HEK293 (cell line): ENCODE measurements at regions of chr17 and their contacts with region 1.

Region 1: GRCh38 chr17:42819944-42820535 is 4.0 kb downstream of the BECN1 start:
- H3K4me3 ChIP-seq: no peak overlapping the region
- H3K27ac ChIP-seq: no peak overlapping the region
- H3K4me1 ChIP-seq: peaks cover 4% of the 10 kb centered on the region; the same call in 1 of the 2 replicates
- CTCF ChIP-seq: no peak

Region 2: GRCh38 chr17:42773290-42774035 is 46.6 kb before region 1 on chr17 and contains the start of gene VPS25:
- CTCF ChIA-PET with region 1: interaction called, 4 read pairs
- POLR2A ChIA-PET with region 1: interaction called, 17 read pairs
- H3K4me3 ChIP-seq: peak within 1 kb of the TSS; percentile 94
- H3K27ac ChIP-seq: peak within 1 kb of the TSS; percentile 64
- H3K4me1 ChIP-seq: peaks cover 4% of the 10 kb centered on the region; the same call in 1 of the 2 replicates
- CTCF ChIP-seq: peak; percentile 79

Region 3: DNA sequence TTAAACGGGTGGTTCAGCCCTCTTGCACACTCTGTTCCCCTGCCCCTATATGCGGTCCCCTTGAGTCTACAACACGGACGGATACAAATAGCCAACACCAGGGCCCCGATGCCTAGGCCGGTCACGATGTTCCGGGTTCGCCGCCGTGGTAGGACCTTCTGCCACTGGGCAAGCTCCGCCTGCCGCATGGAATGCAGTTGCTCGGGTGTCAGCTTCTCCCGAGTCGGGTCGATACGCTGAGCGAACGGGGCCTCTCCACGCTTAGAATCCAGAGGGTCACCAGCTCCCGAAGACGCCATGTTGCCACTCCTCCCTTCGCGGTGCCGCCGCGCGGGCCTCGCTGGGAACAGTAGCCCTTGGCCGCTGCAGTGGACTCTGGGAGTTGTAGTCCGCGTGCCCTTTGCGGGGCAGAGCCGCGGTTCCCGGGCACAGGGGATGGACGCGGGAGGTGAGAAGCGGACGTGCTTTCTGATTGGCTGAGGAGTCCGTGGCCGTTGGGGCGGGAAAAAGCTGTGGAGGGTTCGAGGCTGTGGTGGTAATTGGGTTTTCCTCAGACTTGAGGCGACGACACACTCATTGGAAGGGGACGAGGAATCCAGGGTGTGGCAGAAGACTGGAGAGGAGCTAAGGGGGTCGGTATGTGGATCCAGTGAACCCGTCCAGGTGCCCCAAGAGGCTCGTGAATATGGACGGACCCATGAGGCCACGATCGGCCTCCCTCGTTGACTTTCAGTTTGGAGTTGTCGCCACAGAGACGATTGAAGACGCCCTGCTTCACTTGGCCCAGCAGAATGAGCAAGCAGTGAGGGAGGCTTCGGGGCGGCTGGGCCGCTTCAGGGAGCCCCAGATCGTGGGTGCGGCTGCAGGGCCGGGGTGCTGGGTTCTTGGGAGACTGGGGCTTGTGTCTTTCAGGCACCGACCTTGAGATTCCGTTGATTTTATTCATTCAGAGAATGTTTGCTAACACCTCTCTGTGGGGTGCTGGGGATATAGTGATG is 21.4 kb before region 1 on chr17 and contains the starts of genes CNTD1 and COA3:
- CTCF ChIA-PET with region 1: interaction called, 36 read pairs
- POLR2A ChIA-PET with region 1: interaction called, 11 read pairs
- H3K4me3 ChIP-seq: peak within 1 kb of the TSS; percentile 77
- H3K27ac ChIP-seq: peak within 1 kb of the TSS; percentile 68; the same call in 1 of the 2 replicates
- H3K4me1 ChIP-seq: peaks cover 15% of the 10 kb centered on the region
- CTCF ChIP-seq: peak; percentile 42; the same call in 1 of the 2 replicates

Region 4: GRCh38 chr17:42809250-42809649 is 10.8 kb before region 1 on chr17:
- CTCF ChIA-PET with region 1: interaction called, 46 read pairs
- POLR2A ChIA-PET with region 1: interaction called, 17 read pairs
- H3K4me3 ChIP-seq: no peak overlapping the region
- H3K27ac ChIP-seq: no peak overlapping the region
- H3K4me1 ChIP-seq: no peaks in the 10 kb centered on the region
- CTCF ChIP-seq: no peak

Region 5: DNA sequence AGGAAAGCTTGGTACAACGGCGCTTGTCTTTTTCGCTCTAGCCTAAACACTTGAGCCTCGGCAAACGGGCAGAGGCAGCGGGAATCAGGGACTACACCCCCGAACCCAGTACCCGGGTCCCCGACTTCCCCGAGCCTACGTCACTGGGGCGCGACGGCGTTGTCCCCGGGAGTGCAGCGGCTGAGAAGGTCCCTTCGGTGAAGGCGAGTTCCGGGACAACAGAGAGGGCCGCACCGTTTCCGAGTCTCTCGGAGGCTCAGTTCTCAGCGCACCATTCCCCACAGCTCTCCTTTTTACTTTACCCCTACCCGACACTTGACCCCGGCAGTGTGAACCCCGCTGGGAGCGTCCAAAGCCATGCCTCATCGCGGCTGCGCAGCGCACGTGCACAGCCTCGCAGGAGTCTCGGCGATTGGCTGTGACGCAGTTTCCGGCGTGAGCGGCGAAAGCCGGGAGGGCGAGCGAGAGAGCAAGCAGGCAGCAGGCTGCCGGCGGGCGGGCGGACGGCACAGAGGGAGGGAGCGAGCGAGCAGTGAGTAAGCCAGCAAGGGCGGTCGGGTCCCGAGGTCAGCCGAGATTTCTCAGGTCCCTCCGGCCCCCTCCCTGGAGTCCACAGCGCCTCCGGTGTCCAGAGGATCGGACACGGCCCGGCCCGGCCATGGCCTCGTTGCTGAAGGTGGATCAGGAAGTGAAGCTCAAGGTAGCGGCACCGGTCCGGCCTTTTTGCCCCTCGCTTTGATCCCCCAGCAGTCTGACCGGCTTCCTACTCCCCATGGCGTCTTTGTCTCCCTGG is 13.1 kb after region 1 on chr17 and contains the start of gene PSME3:
- CTCF ChIA-PET with region 1: interaction called, 52 read pairs
- POLR2A ChIA-PET with region 1: interaction called, 35 read pairs
- H3K4me3 ChIP-seq: peak within 1 kb of the TSS; percentile 86
- H3K27ac ChIP-seq: peak within 1 kb of the TSS; percentile 83
- H3K4me1 ChIP-seq: peaks cover 5% of the 10 kb centered on the region
- CTCF ChIP-seq: no peak; the same call in 1 of the 2 replicates

Region 6: DNA sequence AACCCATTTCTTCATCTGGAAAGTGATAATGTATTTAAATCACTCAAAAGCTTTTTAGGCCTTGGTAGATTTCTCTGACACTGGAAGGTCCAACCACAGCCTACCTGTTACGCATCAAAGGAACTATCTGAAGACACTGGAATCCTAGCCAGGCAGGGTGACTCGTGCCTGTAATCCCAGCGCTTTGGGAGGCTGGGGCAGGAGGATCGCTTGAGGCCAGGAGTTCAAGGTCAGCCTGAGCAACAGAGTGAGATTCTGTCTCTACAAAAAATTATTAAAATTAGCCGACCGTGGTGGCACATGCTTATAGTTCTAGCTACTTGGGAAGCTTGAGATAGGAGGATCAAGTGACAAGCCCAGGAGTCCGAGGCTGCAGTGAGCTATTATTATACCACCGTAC is 62.1 kb after region 1 on chr17:
- CTCF ChIA-PET with region 1: no interaction called
- POLR2A ChIA-PET with region 1: no interaction called
- H3K4me3 ChIP-seq: no peak overlapping the region
- H3K27ac ChIP-seq: no peak overlapping the region
- H3K4me1 ChIP-seq: no peaks in the 10 kb centered on the region
- CTCF ChIP-seq: no peak

Region 7: GRCh38 chr17:42928714-42929496 is 108.9 kb after region 1 on chr17:
- CTCF ChIA-PET with region 1: interaction called, 12 read pairs
- POLR2A ChIA-PET with region 1: interaction called, 6 read pairs
- H3K4me3 ChIP-seq: no peak overlapping the region
- H3K27ac ChIP-seq: peak overlapping the region; percentile 36; the same call in 1 of the 2 replicates
- H3K4me1 ChIP-seq: no peaks in the 10 kb centered on the region
- CTCF ChIP-seq: no peak